CD4-positive, alpha-beta memory T cell (primary cell): ENCODE measurements at regions of chr7 and their contacts with region 1.

Region 1: DNA sequence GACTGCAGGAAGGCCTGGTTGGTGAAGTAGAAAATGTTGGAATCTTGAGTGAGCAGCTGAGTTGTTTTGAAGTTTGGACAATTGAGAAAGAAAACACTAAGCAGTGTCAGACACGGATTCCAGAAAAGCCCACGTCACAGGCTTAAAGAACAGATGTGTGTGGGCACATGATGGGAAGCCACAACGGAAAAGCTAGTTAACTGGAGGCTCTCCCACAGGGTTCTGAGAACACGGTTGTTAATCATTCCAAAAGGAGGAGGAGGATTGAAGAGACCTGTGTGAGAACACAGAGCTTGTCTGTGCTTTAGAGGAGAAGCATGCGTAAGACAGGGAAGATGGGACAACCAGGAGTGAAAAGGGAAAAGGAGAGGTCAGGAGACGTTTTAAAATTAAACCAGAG is 42.6 kb downstream of the SHH start:
- DNase-seq: no peak
- H3K4me3 ChIP-seq: no peak overlapping the region
- H3K4me3 Mint-ChIP-seq: no peak overlapping the region
- H3K27ac ChIP-seq: no peak overlapping the region
- H3K27ac Mint-ChIP-seq: no peak overlapping the region
- H3K4me1 ChIP-seq: peaks cover 7% of the 10 kb centered on the region
- H3K4me1 Mint-ChIP-seq: peaks cover 6 to 14% (median 9%) of the 10 kb centered on the region in 4 donors
- H3K27me3 ChIP-seq: no peaks in the 10 kb centered on the region
- H3K27me3 Mint-ChIP-seq: no peaks in the 10 kb centered on the region

Region 2: GRCh38 chr7:155746188-155746587 is 23.5 kb before region 1 on chr7:
- CTCF ChIA-PET with region 1: interaction called, 10 read pairs
- POLR2A ChIA-PET with region 1: no interaction called
- intact Hi-C with region 1: no loop called
- DNase-seq: no peak
- H3K4me3 ChIP-seq: no peak overlapping the region
- H3K4me3 Mint-ChIP-seq: no peak overlapping the region
- H3K27ac ChIP-seq: no peak overlapping the region
- H3K27ac Mint-ChIP-seq: peak overlapping the region in 1 of 7 donors; percentile 1
- H3K4me1 ChIP-seq: peaks cover 15% of the 10 kb centered on the region
- H3K4me1 Mint-ChIP-seq: peaks cover 28 to 82% (median 47%) of the 10 kb centered on the region in 4 donors
- H3K27me3 ChIP-seq: no peaks in the 10 kb centered on the region
- H3K27me3 Mint-ChIP-seq: no peaks in the 10 kb centered on the region

Region 3: DNA sequence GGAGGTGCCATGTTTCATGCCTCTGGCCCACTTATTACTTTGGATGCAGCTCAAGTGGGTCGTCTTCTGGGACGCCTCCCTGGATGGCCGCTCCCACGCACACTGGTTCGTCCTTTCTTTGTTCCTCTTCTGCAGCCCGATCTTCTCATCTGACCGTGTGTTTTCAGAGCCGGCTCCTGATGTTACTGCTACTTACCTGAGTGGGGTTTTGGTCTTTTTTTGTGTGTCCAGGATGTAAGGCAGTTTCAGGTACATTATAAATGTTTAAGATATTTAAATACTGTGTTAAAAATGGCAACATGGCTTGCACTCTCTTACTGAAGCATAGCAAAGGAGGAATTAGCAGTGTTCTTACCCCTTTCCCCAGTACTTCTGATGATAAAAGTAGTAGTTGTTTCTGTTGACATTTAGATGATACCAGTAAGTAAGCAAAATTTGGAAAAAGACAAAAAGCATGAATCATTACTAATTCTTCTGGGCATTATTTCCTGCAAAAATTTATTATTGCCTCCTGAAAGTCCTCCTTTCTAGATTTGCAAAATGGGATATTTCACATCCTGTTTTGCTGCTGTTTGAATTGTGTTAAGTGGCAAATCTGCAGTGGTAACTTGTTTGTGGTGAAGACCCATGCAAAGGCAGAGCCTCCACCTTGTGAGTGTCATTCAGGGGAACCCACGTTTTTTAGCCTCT is 16.8 kb before region 1 on chr7:
- CTCF ChIA-PET with region 1: interaction called, 10 read pairs
- POLR2A ChIA-PET with region 1: no interaction called
- intact Hi-C with region 1: no loop called
- DNase-seq: no peak
- H3K4me3 ChIP-seq: no peak overlapping the region
- H3K4me3 Mint-ChIP-seq: peak overlapping the region in 3 of 8 donors; percentile 27 to 53 (median 28)
- H3K27ac ChIP-seq: no peak overlapping the region
- H3K27ac Mint-ChIP-seq: peak overlapping the region; percentile 1 to 85 (median 68)
- H3K4me1 ChIP-seq: peaks cover 50% of the 10 kb centered on the region
- H3K4me1 Mint-ChIP-seq: peaks cover 56 to 81% (median 70%) of the 10 kb centered on the region in 4 donors
- H3K27me3 ChIP-seq: no peaks in the 10 kb centered on the region
- H3K27me3 Mint-ChIP-seq: no peaks in the 10 kb centered on the region

Region 4: GRCh38 chr7:155885167-155886155 is 115.8 kb after region 1 on chr7:
- CTCF ChIA-PET with region 1: no interaction called
- POLR2A ChIA-PET with region 1: no interaction called
- intact Hi-C with region 1: no loop called
- DNase-seq: no peak
- H3K4me3 ChIP-seq: no peak overlapping the region
- H3K4me3 Mint-ChIP-seq: no peak overlapping the region
- H3K27ac ChIP-seq: no peak overlapping the region
- H3K27ac Mint-ChIP-seq: no peak overlapping the region
- H3K4me1 ChIP-seq: no peaks in the 10 kb centered on the region
- H3K4me1 Mint-ChIP-seq: no peaks in the 10 kb centered on the region
- H3K27me3 ChIP-seq: no peaks in the 10 kb centered on the region
- H3K27me3 Mint-ChIP-seq: peaks cover 6 to 11% of the 10 kb centered on the region in 2 donors